Cardiac septum (tissue), 1 donor: ENCODE measurements at regions of chr19 and their contacts with region 1.

Region 1: GRCh38 chr19:14073261-14073924 is 807 bp downstream of the MISP3 start:
- DNase-seq: peak; percentile 89

Region 2: DNA sequence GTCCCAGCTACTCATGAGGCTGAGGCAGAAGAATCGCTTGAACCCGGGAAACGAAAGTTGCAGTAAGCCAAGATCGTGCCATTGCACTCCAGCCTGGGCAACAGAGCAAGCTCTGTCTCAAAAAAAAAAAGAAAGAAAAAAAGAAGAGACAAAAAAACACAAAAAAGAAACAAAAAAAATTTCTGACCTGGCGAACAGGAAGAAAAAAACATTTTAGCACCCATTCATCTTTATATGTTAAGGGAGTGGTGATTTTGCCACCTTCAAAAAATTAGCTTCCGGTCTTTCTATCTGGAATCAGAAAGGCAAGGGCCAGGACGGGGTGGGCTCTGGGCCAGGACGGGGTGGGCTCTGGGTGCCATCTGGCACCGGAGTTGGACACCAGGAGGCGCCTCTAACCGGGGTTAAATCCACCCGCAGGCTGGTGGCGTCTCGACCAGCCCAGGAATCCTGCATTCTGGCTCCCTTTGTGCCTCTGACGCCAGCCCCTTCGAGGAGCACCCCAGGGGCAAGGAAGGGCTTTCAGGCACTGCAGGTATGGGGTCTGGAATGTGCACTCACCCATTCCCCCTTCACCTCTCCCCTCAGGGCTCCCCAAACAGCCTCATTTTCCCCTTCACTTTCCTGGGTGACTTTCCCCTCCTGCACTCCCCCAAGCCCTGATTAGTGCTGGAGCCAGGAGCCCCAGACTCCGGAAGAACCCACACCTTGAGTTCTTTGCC is 288.5 kb before region 1 on chr19:
- intact Hi-C with region 1: loop called (anchors 10 kb)
- DNase-seq: peak; percentile 87

Region 3: GRCh38 chr19:13880059-13881043 is 193.0 kb before region 1 on chr19:
- intact Hi-C with region 1: loop called (anchors 1 kb)
- DNase-seq: peak; percentile 99

Region 4: DNA sequence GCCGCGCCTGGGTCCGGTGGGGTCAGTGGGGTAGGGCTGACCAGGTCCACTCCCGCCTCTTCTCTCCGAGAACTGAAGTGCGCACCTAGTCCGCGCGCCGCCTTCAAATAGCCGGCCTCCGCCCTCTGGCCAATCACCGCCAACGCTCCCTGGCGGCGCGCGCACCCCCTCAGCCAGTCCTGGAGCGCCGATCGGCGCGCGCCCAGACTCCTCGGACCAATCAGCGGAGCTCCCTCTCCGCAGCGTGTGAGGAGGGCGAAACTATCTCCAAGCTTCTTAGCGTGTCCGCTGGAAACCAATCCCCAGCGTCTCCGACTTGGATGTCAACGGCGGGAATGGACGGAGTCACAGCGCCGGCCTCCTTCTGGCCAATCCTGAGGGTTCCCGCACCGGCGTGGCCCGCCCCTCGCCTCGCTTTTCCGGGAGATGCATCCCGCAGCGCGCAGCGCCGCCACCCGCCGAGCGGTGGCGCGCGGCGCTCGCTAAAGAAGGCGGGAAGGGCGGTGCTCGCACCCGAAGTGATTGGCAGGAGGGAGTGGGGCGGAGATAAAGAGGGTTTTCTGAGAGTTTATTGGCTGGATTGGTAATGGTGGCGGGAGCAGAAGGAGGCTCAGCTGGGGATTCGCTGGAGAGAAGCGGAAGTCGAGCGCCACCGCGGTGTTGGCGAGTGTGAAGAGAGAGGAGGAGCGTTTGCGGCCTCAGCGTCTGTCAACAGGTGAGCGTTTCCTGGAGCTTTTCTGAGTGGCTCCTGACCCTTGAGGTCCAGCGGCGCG is 63.3 kb after region 1 on chr19 and contains the start of gene ASF1B:
- intact Hi-C with region 1: loop called (anchors 2 kb)
- DNase-seq: peak; percentile 99
- total RNA-seq, gene ASF1B: 0.70 TPM

Region 5: DNA sequence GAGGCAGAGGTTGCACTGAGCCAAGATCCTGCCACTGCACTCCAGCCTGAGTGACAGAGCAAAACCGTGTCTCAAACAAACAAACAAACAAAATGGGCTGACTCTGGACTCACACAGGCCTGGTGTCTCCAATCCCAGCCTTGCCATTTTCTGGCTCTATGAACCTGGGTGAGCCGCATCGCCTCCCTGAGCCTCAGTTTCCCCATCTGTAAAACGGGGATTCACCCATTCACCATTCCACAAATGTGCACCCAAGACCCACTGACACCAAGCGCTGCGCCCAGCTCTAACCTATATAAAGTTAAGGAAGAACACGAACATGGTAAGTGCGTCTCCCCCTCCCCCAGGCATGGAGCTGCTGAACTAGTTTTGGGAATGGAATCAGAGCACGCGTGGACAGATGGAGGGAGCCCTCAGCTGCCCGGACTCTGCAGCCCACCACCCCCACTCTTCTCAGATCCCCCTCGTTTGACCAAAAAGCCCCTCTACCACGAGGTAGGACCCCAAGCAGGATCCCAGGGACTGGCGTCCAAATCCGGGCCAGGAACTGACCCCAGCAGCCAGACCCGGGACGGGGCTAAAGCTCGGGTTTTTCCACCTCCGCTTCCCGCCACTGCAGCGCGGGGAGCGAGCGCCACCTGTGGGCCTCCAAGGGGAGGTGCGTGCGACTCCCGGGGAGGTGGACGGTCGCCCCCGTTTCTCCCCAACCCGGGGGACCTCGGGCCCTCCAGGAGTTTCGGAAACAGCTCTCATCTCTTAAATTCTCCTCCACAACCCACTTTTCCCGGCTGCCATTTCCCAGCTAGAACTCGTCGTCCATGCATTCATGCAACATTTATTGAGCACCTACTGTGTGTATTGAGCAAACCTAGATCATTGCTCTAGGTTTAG is 274.9 kb after region 1 on chr19:
- intact Hi-C with region 1: loop called (anchors 10 kb)
- DNase-seq: peak; percentile 86